ENCODE measurements at regions of chr7 and their contacts with region 1.

Region 1: DNA sequence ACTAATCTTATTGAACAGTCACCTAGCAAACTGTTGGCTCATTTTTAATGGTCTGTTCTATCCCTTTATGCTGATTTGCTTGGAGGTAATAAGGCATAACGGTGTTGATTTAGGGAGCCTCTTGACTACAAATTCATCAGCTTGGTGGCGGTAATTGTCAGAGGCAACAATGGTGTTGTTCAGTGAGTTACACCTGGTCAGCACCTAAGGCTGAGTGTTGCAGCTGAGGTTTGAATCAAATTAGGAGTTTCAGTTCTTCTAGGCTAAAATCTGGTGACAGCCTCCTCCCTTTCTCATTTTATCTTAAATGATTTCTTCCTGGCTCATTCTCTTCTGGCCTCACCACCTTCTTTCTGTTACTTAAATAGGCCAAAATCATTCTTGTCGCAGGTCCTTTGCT is 42.3 kb upstream of the SP8 start:
- DNase-seq: no peak
- ATAC-seq: no peak
- H3K4me3 ChIP-seq: no peak overlapping the region
- H3K27ac ChIP-seq: no peak overlapping the region
- H3K4me1 ChIP-seq: no peaks in the 10 kb centered on the region
- H3K27me3 ChIP-seq: no peaks in the 10 kb centered on the region; a peak in 2 of 5 replicates
- CTCF ChIP-seq: no peak
- EP300 ChIP-seq: no peak
- POLR2A ChIP-seq: no peak
- RAD21 ChIP-seq: no peak

Region 2: GRCh38 chr7:20793694-20794394 is 35.1 kb before region 1 on chr7:
- CTCF ChIA-PET with region 1: no interaction called
- POLR2A ChIA-PET with region 1: no interaction called
- in situ Hi-C with region 1: no loop called
- intact Hi-C with region 1: loop called (anchors 5 kb)
- DNase-seq: peak in 1 of 4 experiments; percentile 27
- ATAC-seq: no peak
- H3K4me3 ChIP-seq: no peak overlapping the region
- H3K27ac ChIP-seq: no peak overlapping the region
- H3K4me1 ChIP-seq: peaks cover 7 to 21% of the 10 kb centered on the region in 2 experiments; a peak in 3 of 5 replicates
- H3K27me3 ChIP-seq: peaks cover 16 to 36% of the 10 kb centered on the region in 2 experiments
- CTCF ChIP-seq: no peak
- EP300 ChIP-seq: no peak
- POLR2A ChIP-seq: no peak
- RAD21 ChIP-seq: no peak

Region 3: GRCh38 chr7:20991544-20991943 is 162.6 kb after region 1 on chr7:
- CTCF ChIA-PET with region 1: no interaction called
- POLR2A ChIA-PET with region 1: no interaction called
- in situ Hi-C with region 1: no loop called
- intact Hi-C with region 1: no loop called
- DNase-seq: no peak
- ATAC-seq: no peak
- H3K4me3 ChIP-seq: no peak overlapping the region
- H3K27ac ChIP-seq: no peak overlapping the region
- H3K4me1 ChIP-seq: no peaks in the 10 kb centered on the region
- H3K27me3 ChIP-seq: no peaks in the 10 kb centered on the region
- CTCF ChIP-seq: no peak
- EP300 ChIP-seq: no peak
- POLR2A ChIP-seq: no peak
- RAD21 ChIP-seq: no peak